Ascending aorta (tissue), 2 donors: ENCODE measurements at regions of chr2 and their contacts with region 1.

Region 1: GRCh38 chr2:46887028-46887885 is 28.3 kb downstream of the MCFD2 start:
- DNase-seq: no peak
- H3K4me3 ChIP-seq: no peak overlapping the region
- H3K27ac ChIP-seq: no peak overlapping the region
- H3K4me1 ChIP-seq: peaks cover 2 to 10% of the 10 kb centered on the region in 2 donors
- H3K27me3 ChIP-seq: no peaks in the 10 kb centered on the region
- CTCF ChIP-seq: no peak

Region 2: DNA sequence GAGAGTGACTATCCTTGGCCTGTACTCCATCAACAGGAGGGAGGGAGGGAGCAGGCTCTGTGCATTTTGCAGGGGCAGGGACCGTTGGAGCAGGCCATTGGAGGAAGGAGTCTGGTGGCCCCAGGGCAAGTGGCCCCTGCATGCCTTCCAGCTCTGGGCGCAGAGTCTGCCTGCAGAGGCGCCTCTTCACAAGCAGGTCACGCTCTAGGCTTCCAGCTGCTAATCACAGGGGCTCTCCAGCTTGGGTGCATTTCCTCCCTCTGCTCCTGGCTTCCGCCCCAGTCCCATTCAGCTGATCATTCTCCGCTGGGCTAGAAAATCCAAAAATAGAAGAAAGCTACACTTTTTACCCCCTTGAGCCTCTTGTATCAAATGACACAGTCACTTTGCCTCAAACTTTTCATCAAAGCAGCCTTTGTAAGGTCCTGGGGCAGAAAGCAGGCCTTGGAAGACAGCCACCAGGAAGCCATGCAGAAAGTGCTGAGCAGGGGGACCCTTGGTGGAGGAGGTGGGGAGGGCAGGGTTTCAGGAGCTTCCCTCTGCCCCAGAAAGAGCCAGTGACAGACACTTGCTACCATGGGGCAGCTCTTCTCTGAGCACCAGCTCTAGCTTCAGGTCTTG is 396.6 kb before region 1 on chr2:
- intact Hi-C with region 1: no loop called
- DNase-seq: peak; percentile 33 to 73
- H3K4me3 ChIP-seq: no peak overlapping the region
- H3K27ac ChIP-seq: peak overlapping the region; percentile 64 to 81
- H3K4me1 ChIP-seq: peaks cover 3 to 24% of the 10 kb centered on the region in 2 donors
- H3K27me3 ChIP-seq: no peaks in the 10 kb centered on the region
- CTCF ChIP-seq: peak in 2 of 3 experiments; percentile 12 to 37

Region 3: GRCh38 chr2:46632349-46632748 is 254.9 kb before region 1 on chr2:
- intact Hi-C with region 1: loop called (anchors 1 kb)
- DNase-seq: no peak
- H3K4me3 ChIP-seq: no peak overlapping the region
- H3K27ac ChIP-seq: no peak overlapping the region
- H3K4me1 ChIP-seq: no peaks in the 10 kb centered on the region
- H3K27me3 ChIP-seq: no peaks in the 10 kb centered on the region
- CTCF ChIP-seq: peak; percentile 37 to 67 (median 45)

Region 4: DNA sequence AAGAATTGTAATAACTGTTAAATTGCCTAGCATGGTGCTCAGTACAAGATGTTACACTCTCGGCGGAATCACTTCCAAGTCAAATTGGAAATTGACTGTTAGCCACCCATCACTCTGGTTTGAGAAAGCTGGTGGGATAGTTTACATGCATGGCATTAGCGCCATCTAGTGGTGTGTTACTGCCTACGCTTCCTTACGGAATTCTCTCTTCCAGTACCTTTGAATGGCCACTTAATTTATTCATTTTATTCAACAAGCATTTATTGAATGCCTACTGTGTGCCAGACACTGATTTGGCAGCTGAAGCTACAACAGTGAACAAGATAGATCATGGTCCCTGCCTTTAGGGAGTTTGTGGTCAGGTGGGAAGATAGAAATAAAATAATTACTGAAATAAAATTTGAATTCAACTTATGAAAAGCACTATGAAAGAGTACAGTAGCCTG is 236.7 kb before region 1 on chr2:
- intact Hi-C with region 1: loop called (anchors 1 kb)
- DNase-seq: peak in 1 of 2 donors; percentile 84
- H3K4me3 ChIP-seq: no peak overlapping the region
- H3K27ac ChIP-seq: no peak overlapping the region
- H3K4me1 ChIP-seq: peaks cover 0 to 1% of the 10 kb centered on the region in 2 donors
- H3K27me3 ChIP-seq: no peaks in the 10 kb centered on the region
- CTCF ChIP-seq: peak; percentile 85 to 92 (median 92)

Region 5: DNA sequence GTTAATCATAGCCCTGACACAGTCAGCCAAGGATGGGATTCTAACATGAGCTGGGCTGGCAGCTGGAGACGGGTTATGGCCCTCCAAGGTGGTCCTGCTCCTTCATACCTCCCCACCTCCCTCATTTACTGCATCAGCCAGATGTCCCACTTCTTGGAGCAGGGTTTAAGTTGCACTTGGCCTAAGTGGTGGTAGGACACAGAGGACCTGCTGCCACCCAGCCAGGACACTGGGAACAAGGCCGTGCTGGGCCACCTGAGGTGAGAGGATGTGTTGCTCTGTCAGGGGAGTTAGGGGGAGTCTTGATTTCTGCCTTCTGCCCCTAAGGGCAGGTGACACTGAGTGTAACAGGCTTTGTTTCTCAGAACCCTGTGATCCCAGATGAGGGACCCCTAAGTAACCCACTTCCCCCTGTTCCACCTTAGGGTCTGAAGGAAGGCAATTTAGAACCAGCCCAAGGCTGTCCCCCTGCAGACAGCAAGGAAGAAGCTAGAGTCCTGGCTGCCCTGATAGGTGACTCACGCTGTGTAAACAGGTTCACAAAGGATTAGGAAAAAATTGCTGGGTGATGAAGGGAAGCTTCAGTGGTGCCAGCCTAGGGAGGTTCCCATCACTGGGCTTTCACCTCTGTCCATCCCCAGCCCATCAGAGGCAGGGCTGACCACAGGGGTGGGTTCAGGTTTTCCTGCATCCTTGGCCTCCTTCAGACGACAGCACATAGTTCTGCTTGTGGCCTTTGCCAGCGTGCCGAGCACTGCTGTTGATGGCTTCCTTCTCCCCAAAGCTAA is 142.7 kb after region 1 on chr2:
- intact Hi-C with region 1: no loop called
- DNase-seq: no peak
- H3K4me3 ChIP-seq: no peak overlapping the region
- H3K27ac ChIP-seq: peak overlapping the region; percentile 95 to 97
- H3K4me1 ChIP-seq: peaks cover 17 to 35% of the 10 kb centered on the region in 2 donors
- H3K27me3 ChIP-seq: no peaks in the 10 kb centered on the region
- CTCF ChIP-seq: no peak